Activated CD4-positive, alpha-beta memory T cell treated with anti-CD3 and anti-CD28 coated beads for 36 hours (primary cell): ENCODE measurements at regions of chr1 and their contacts with region 1.

Region 1: DNA sequence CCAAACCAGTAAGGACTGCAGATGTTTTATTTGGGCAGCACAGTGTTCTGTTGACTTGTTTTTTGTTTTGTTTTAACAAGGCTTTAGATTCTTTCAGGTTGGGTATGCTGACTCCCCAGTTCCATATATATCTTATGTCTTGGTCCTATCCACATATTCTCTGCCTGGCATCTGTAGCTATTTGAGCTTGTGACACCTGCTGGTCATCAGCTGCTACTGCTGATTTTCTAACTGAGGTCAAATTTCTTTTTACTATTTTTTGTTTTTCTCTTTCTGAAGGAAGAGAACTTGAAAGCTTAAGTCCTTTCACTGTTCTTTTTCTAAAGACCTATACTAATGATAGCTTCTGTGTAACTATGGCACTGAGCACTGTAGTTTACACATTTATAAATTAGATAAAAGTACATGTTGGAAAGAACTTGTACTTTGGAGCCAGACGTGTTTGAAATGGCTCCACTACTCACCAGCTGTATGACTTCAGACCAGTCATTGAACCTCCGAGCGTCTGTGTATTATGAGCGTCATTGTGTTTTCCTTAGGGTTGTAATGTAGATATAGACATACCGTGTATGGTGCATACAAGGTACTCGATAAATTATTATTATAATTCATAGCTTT is 109.4 kb downstream of the NRDC start:
- DNase-seq: peak; percentile 32
- H3K4me3 Mint-ChIP-seq: no peak overlapping the region
- H3K27ac Mint-ChIP-seq: no peak overlapping the region
- H3K4me1 Mint-ChIP-seq: peaks cover 11% of the 10 kb centered on the region
- H3K27me3 Mint-ChIP-seq: no peaks in the 10 kb centered on the region

Region 2: DNA sequence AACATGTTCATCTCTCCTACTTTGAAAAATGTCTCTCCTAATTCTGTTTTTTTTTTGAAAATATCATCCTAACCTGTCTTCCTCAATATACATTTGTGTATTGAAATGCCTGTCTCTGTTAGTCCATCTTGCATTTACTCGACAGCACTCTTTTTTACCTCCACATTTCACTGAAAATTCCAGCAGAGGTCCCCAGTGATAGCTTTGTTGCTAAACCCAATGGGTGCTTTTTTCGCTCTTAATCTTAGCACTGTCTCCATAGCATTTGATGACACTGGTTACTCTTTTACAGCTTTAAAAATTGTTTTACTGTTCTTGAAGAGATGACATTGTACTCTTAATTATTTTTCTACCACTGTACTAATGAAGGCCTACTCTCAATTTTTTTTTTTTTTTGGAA is 141.4 kb before region 1 on chr1:
- CTCF ChIA-PET with region 1: interaction called, 20 read pairs
- POLR2A ChIA-PET with region 1: interaction called, 3 read pairs
- intact Hi-C with region 1: loop called (anchors 5 kb)
- DNase-seq: no peak
- H3K4me3 Mint-ChIP-seq: no peak overlapping the region
- H3K27ac Mint-ChIP-seq: no peak overlapping the region
- H3K4me1 Mint-ChIP-seq: peaks cover 39% of the 10 kb centered on the region
- H3K27me3 Mint-ChIP-seq: no peaks in the 10 kb centered on the region

Region 3: DNA sequence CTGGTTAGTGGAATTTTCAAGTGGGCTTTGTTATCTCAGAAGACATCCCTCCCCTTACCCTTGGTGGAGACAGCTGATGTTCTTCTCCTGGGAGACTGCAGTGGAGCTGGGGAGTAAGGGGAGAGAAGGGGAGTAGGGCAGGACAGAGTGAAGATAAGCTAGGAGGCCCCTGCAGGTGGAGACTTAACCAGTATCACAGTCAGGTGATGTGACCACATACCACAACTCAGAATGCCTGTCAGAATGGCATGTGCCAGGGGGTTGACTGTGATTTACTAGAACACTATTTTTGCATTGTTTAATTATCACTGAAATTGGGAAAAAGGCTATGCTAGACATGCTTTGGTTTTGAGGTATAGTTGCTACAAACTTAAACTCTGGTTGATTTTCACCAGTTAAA is 15.1 kb before region 1 on chr1:
- CTCF ChIA-PET with region 1: interaction called, 13 read pairs
- POLR2A ChIA-PET with region 1: no interaction called
- intact Hi-C with region 1: no loop called
- DNase-seq: no peak
- H3K4me3 Mint-ChIP-seq: no peak overlapping the region
- H3K27ac Mint-ChIP-seq: no peak overlapping the region
- H3K4me1 Mint-ChIP-seq: peaks cover 11% of the 10 kb centered on the region
- H3K27me3 Mint-ChIP-seq: no peaks in the 10 kb centered on the region